ENCODE measurements at regions of chr6 and their contacts with region 1.

Region 1: GRCh38 chr6:2296781-2297180 is 51.4 kb upstream of the GMDS start:
- DNase-seq: no peak
- H3K4me3 ChIP-seq: no peak overlapping the region
- H3K27ac ChIP-seq: no peak overlapping the region
- H3K4me1 ChIP-seq: no peaks in the 10 kb centered on the region
- H3K27me3 ChIP-seq: no peaks in the 10 kb centered on the region
- CTCF ChIP-seq: no peak
- POLR2A ChIP-seq: no peak

Region 2: DNA sequence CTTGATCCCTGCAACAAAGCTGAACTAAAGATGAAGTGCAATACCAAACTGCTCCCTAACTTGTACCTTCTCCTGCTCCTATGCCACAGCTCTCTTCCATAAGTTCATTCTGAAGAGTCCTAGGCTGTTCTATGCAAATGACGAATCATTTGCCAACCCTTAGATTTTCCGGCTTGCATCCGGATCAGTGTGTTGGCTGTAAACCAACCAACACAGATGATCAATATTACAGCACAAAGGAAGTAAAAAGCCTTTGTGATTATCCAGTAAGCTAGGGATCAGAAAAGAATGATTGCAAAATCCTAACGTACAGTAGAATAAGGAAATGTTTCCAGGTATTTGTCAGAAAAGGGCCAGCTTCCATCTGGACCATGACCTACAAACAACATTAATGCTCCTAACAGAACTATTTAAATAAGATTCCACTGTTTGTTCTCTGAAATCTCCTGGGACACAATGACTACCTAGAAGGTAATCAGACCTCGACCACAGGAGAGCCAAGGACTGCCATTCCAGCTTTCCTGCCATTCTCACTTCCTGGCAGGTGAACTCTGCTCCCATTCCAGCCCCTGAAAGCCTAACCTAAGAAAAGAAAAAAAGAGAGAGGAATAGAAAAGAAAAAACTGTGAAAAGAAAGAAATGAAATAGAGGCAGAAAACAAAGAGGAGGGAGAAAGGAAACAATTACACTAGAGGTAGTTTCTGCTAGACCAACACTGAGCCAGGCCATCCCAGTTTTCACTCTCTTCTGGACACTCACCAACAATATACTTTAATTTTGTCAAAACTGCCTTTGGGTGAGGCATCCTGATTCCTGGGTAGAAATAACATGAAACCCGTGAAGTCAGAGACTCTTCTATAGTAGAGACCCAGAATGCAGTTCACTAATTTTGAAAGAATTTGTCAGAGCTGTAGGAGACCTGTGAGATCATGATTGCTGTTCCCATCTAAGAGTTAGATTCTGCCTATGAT is 71.1 kb before region 1 on chr6:
- intact Hi-C with region 1: loop called (anchors 2 kb)
- DNase-seq: no peak
- H3K4me3 ChIP-seq: no peak overlapping the region
- H3K27ac ChIP-seq: peak overlapping the region; percentile 15 to 23
- H3K4me1 ChIP-seq: peaks cover 0 to 6% of the 10 kb centered on the region in 2 donors
- H3K27me3 ChIP-seq: no peaks in the 10 kb centered on the region
- CTCF ChIP-seq: no peak
- POLR2A ChIP-seq: no peak

Region 3: GRCh38 chr6:2714111-2714895 is 417.5 kb after region 1 on chr6:
- intact Hi-C with region 1: no loop called
- DNase-seq: no peak
- H3K4me3 ChIP-seq: no peak overlapping the region
- H3K27ac ChIP-seq: no peak overlapping the region
- H3K4me1 ChIP-seq: no peaks in the 10 kb centered on the region
- H3K27me3 ChIP-seq: no peaks in the 10 kb centered on the region
- CTCF ChIP-seq: no peak
- POLR2A ChIP-seq: no peak

Region 4: GRCh38 chr6:3542032-3542640 is 1245.4 kb after region 1 on chr6:
- intact Hi-C with region 1: no loop called
- DNase-seq: no peak
- H3K4me3 ChIP-seq: no peak overlapping the region
- H3K27ac ChIP-seq: no peak overlapping the region
- H3K4me1 ChIP-seq: no peaks in the 10 kb centered on the region
- H3K27me3 ChIP-seq: no peaks in the 10 kb centered on the region
- CTCF ChIP-seq: no peak
- POLR2A ChIP-seq: no peak